HepG2 (cell line): ENCODE measurements at regions of chr18 and their contacts with region 1.

Region 1: GRCh38 chr18:33135951-33136660 is 304.4 kb downstream of the CCDC178 start:
- DNase-seq: no peak
- ATAC-seq: no peak
- H3K4me3 ChIP-seq: no peak overlapping the region
- H3K27ac ChIP-seq: no peak overlapping the region
- H3K4me1 ChIP-seq: no peaks in the 10 kb centered on the region
- H3K27me3 ChIP-seq: no peaks in the 10 kb centered on the region
- CTCF ChIP-seq: no peak
- EP300 ChIP-seq: no peak
- POLR2A ChIP-seq: no peak
- RAD21 ChIP-seq: no peak

Region 2: DNA sequence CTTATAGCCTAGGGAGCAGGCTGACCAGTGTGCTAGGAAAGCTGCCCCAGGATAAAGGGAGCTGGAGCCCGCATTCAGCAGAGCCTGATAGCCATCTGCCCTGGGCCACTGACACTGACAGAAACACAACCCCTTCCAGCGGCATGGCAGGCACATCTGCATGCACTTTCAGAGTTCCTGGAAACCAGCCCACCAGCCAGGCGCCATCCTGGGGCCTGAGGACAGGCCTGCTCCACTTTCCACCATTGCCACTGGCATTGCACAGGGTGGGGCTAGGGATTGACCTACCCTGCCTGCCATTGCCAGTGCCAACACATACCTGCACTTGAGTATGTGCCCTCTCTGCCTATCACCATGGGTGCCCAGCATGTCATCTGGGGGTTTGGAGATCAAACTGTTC is 73.2 kb before region 1 on chr18:
- CTCF ChIA-PET with region 1: no interaction called
- POLR2A ChIA-PET with region 1: no interaction called
- in situ Hi-C with region 1: no loop called
- intact Hi-C with region 1: no loop called
- DNase-seq: no peak
- ATAC-seq: no peak
- H3K4me3 ChIP-seq: no peak overlapping the region
- H3K27ac ChIP-seq: no peak overlapping the region
- H3K4me1 ChIP-seq: no peaks in the 10 kb centered on the region
- H3K27me3 ChIP-seq: no peaks in the 10 kb centered on the region
- CTCF ChIP-seq: no peak
- EP300 ChIP-seq: no peak
- POLR2A ChIP-seq: no peak
- RAD21 ChIP-seq: no peak

Region 3: GRCh38 chr18:33152376-33152775 is 16.3 kb after region 1 on chr18:
- CTCF ChIA-PET with region 1: no interaction called
- POLR2A ChIA-PET with region 1: no interaction called
- in situ Hi-C with region 1: no loop called
- intact Hi-C with region 1: loop called (anchors 1 kb)
- DNase-seq: no peak
- ATAC-seq: no peak
- H3K4me3 ChIP-seq: no peak overlapping the region
- H3K27ac ChIP-seq: no peak overlapping the region
- H3K4me1 ChIP-seq: no peaks in the 10 kb centered on the region
- H3K27me3 ChIP-seq: no peaks in the 10 kb centered on the region
- CTCF ChIP-seq: no peak
- EP300 ChIP-seq: no peak
- POLR2A ChIP-seq: no peak
- RAD21 ChIP-seq: no peak

Region 4: DNA sequence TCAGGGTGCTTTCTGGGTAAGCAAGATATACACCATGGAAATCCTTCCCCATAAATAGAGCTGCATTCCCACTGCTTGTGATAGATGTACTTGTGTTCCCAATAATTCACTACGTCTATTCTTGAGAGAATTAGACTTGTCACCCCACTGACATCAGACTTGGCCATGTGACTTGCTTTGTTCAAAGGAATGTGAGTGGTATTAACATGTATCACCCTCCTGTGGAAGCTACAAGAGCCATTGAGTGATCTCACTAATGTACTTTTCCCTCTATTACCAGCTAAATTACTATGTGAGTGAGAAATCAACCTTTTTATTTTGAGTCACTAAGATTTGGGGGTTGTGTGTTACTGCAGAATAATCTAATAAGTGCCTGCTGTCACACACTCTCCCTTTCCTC is 128.5 kb after region 1 on chr18:
- CTCF ChIA-PET with region 1: no interaction called
- POLR2A ChIA-PET with region 1: no interaction called
- in situ Hi-C with region 1: no loop called
- intact Hi-C with region 1: no loop called
- DNase-seq: no peak
- ATAC-seq: no peak
- H3K4me3 ChIP-seq: no peak overlapping the region
- H3K27ac ChIP-seq: no peak overlapping the region
- H3K4me1 ChIP-seq: no peaks in the 10 kb centered on the region
- H3K27me3 ChIP-seq: no peaks in the 10 kb centered on the region
- CTCF ChIP-seq: no peak
- EP300 ChIP-seq: no peak
- POLR2A ChIP-seq: no peak
- RAD21 ChIP-seq: no peak